Mammary epithelial cell (primary cell): ENCODE measurements at regions of chr7 and their contacts with region 1.

Region 1: GRCh38 chr7:20407585-20408461 is 77.1 kb downstream of the ITGB8 start:
- DNase-seq: peak; percentile 76
- H3K4me3 ChIP-seq: no peak overlapping the region
- H3K27ac ChIP-seq: peak overlapping the region; percentile 67
- H3K4me1 ChIP-seq: peaks cover 21% of the 10 kb centered on the region
- H3K27me3 ChIP-seq: no peaks in the 10 kb centered on the region
- CTCF ChIP-seq: no peak

Region 2: DNA sequence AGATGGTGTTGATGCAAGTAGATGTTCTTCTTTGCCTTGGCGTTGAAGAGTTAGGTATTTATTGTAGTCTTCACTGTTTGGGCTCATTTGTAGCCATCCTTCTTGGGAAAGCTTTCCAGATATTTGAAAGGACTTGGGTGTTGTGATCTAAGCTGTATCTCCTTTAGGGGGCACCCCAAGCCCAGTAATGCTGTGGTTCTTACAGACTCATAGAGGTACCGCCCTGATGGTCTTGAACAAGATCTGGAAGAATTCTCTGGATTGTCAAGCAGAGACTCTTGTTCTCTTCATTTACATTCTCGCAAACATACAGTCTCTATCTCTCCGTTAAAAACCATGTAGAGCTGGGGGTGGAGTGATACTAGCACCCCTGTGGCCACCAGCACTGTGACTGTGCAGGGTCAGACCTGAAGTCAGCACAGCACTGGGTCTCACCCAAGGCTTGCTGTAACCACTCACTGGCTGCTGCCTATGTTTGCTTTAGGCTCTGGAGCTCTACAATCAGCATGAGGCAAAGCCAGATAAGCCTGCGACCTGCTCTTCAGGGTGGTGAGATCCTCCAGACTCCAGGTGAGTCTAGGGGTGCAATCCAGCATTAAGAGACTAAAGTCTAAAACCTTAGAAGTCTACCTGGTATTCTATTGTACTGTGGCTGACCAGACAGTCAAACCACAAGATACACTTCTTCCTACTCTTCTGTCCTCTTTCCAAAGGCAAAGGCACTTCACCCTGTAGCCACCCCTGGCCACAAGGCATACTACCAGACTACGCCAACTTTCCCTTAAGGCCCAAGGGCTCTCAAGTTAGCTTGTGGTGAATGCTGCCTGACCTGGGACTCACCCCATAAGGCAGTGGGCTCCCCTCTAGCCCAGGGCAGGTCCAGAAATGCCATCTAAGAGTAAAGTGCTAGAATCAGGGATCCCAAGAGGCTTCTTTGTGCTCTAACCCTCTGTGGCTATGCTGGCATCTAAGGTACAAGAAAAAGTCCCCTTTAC is 424.7 kb before region 1 on chr7:
- CTCF ChIA-PET with region 1: no interaction called
- dilution Hi-C with region 1: no loop called
- in situ Hi-C with region 1: no loop called
- intact Hi-C with region 1: loop called (anchors 10 kb)
- DNase-seq: peak; percentile 45
- H3K4me3 ChIP-seq: no peak overlapping the region
- H3K27ac ChIP-seq: no peak overlapping the region
- H3K4me1 ChIP-seq: no peaks in the 10 kb centered on the region
- H3K27me3 ChIP-seq: no peaks in the 10 kb centered on the region
- CTCF ChIP-seq: peak in 1 of 2 donors; percentile 40

Region 3: GRCh38 chr7:19999681-20000080 is 408.1 kb before region 1 on chr7:
- CTCF ChIA-PET with region 1: no interaction called
- dilution Hi-C with region 1: no loop called
- in situ Hi-C with region 1: no loop called
- intact Hi-C with region 1: no loop called
- DNase-seq: no peak
- H3K4me3 ChIP-seq: no peak overlapping the region
- H3K27ac ChIP-seq: no peak overlapping the region
- H3K4me1 ChIP-seq: no peaks in the 10 kb centered on the region
- H3K27me3 ChIP-seq: no peaks in the 10 kb centered on the region
- CTCF ChIP-seq: no peak

Region 4: DNA sequence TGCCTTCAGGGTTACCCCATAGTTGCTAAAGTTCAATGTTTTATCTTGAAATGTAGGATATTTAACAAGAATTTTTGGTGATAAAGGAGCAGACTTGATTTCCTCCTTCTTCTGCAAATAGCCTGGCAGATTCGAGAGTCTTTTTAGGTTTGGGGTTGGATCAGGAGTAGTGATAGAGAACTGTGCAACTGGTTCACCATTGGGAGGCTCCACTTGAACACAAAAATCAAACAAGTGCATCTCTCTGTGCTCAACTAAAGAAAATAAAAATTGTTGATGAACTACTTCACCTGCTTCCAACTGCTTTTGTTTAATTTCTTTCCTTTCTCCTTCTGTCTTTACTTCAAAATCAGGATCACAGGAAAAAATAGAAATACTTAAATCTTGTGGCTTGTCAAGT is 249.1 kb before region 1 on chr7:
- CTCF ChIA-PET with region 1: no interaction called
- dilution Hi-C with region 1: no loop called
- in situ Hi-C with region 1: no loop called
- intact Hi-C with region 1: loop called (anchors 10 kb)
- DNase-seq: no peak
- H3K4me3 ChIP-seq: no peak overlapping the region
- H3K27ac ChIP-seq: no peak overlapping the region
- H3K4me1 ChIP-seq: peaks cover 5% of the 10 kb centered on the region
- H3K27me3 ChIP-seq: no peaks in the 10 kb centered on the region
- CTCF ChIP-seq: peak; percentile 2 to 29